Heart right ventricle (tissue), 16 donors: ENCODE measurements at regions of chr1 and their contacts with region 1.

Region 1: GRCh38 chr1:226121587-226122400 is 59.3 kb downstream of the H3-3A start:
- DNase-seq: peak; percentile 58 to 75
- ATAC-seq: peak; percentile 73 to 91 (median 84)
- H3K4me3 ChIP-seq: peak overlapping the region; percentile 36 to 83 (median 66)
- H3K27ac ChIP-seq: peak overlapping the region; percentile 52 to 86 (median 72)
- H3K4me1 ChIP-seq: peaks cover 3 to 16% (median 13%) of the 10 kb centered on the region in 9 donors
- H3K27me3 ChIP-seq: peaks cover 0 to 11% (median 0%) of the 10 kb centered on the region in 7 donors
- CTCF ChIP-seq: peak; percentile 65 to 98 (median 85)

Region 2: GRCh38 chr1:225526878-225527277 is 594.9 kb before region 1 on chr1:
- intact Hi-C with region 1: no loop called
- DNase-seq: no peak
- ATAC-seq: peak in 4 of 8 donors; percentile 27 to 62 (median 44)
- H3K4me3 ChIP-seq: no peak overlapping the region
- H3K27ac ChIP-seq: no peak overlapping the region
- H3K4me1 ChIP-seq: peaks cover 0 to 32% (median 10%) of the 10 kb centered on the region in 9 donors
- H3K27me3 ChIP-seq: no peaks in the 10 kb centered on the region
- CTCF ChIP-seq: no peak

Region 3: DNA sequence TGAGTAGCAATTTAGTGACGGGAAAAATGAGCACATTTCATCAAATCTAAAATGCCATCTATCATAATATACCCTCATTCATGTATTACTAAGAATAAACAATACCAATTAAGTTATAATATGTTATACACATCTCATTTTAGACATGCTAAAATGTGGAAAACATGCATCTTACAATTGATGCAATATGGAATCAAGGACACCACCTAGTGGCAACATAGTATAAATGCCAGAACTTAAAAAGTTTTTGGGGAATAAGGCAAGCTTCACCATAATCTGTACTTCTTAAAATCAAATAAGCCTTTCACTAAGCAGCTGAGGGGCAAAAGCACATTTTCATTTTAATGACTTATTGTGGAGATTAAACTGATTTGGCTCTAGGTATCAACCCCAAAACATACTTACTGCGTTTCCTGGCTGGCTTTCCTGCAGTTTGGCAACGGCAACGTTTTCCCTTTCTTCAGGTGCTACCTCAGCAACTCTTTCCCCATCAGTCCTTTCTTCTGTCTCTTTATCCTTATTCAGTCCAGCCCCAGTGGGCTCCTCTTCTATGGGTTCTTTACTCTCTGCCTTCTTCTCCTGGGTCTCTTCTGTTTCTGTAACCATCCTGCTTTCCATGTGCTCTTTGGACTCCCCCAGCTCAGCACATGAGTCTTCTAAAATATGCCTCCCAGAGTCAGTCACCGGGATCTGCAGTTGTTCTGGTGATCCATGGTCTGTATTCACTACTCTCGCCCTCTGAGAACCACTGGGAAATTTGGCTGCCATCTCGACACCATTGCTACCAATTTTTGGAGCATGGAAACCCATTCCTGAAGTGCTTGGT is 134.1 kb before region 1 on chr1:
- intact Hi-C with region 1: loop called in 1 of 10 experiments (anchors 5 kb)
- DNase-seq: no peak
- ATAC-seq: no peak
- H3K4me3 ChIP-seq: no peak overlapping the region
- H3K27ac ChIP-seq: no peak overlapping the region
- H3K4me1 ChIP-seq: peaks cover 0 to 10% (median 0%) of the 10 kb centered on the region in 9 donors
- H3K27me3 ChIP-seq: no peaks in the 10 kb centered on the region
- CTCF ChIP-seq: peak; percentile 59 to 81 (median 75)

Region 4: GRCh38 chr1:226009650-226010044 is 112.1 kb before region 1 on chr1:
- intact Hi-C with region 1: loop called in 2 of 10 experiments (anchors 5 kb)
- DNase-seq: no peak
- ATAC-seq: no peak
- H3K4me3 ChIP-seq: no peak overlapping the region
- H3K27ac ChIP-seq: no peak overlapping the region
- H3K4me1 ChIP-seq: peaks cover 0 to 3% (median 0%) of the 10 kb centered on the region in 9 donors
- H3K27me3 ChIP-seq: no peaks in the 10 kb centered on the region
- CTCF ChIP-seq: no peak

Region 5: DNA sequence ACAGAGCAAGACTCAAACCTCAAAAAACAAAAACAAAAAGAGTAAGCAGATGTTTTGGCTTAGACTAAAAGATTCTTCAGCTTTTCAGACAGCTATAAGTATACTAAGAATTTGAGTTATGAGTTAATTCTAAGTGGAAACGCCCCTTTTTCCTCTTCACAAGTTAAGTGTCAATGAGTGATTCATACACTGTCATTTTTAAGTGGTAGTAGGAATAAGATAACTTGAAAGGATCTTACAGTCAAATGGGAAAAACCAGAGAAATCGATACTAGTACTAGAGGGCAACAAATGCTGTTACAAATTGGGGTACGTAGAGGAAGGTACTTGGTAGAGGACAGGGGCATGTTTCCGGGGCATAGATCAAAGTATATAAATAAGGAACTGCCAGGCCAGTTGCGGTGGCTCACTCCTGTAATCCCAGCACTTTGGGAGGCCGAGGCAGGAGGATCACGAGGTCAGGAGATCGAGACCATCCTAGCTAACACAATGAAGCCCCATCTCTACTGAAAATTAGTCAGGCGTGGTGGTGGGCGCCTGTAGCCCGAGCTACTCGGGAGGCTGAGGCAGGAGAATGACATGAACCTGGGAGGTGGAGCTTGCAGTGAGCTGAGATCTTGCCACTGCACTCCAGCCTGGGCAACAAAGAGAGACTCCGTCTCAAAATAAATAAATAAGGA is 51.8 kb before region 1 on chr1:
- intact Hi-C with region 1: loop called in 7 of 10 experiments (anchors 1 to 5 kb)
- DNase-seq: no peak
- ATAC-seq: no peak
- H3K4me3 ChIP-seq: no peak overlapping the region
- H3K27ac ChIP-seq: no peak overlapping the region
- H3K4me1 ChIP-seq: peaks cover 5 to 66% (median 50%) of the 10 kb centered on the region in 9 donors
- H3K27me3 ChIP-seq: no peaks in the 10 kb centered on the region
- CTCF ChIP-seq: no peak

Region 6: GRCh38 chr1:226195144-226195543 is 73.3 kb after region 1 on chr1:
- intact Hi-C with region 1: loop called (anchors 1 to 5 kb)
- DNase-seq: no peak
- ATAC-seq: no peak
- H3K4me3 ChIP-seq: no peak overlapping the region
- H3K27ac ChIP-seq: no peak overlapping the region
- H3K4me1 ChIP-seq: peaks cover 0 to 4% (median 0%) of the 10 kb centered on the region in 9 donors
- H3K27me3 ChIP-seq: peaks cover 0 to 8% (median 0%) of the 10 kb centered on the region in 7 donors
- CTCF ChIP-seq: no peak

Region 7: GRCh38 chr1:226332947-226333346 is 211.2 kb after region 1 on chr1:
- intact Hi-C with region 1: loop called in 5 of 10 experiments (anchors 5 to 10 kb)
- DNase-seq: no peak
- ATAC-seq: no peak
- H3K4me3 ChIP-seq: no peak overlapping the region
- H3K27ac ChIP-seq: no peak overlapping the region
- H3K4me1 ChIP-seq: peaks cover 0 to 5% (median 0%) of the 10 kb centered on the region in 9 donors
- H3K27me3 ChIP-seq: no peaks in the 10 kb centered on the region
- CTCF ChIP-seq: no peak